ENCODE measurements at regions of chr17 and their contacts with region 1.

Region 1: GRCh38 chr17:57499648-57500049 is 243.3 kb downstream of the MSI2 start:
- DNase-seq: no peak
- H3K4me3 ChIP-seq: no peak overlapping the region
- H3K27ac ChIP-seq: no peak overlapping the region
- H3K4me1 ChIP-seq: no peaks in the 10 kb centered on the region
- H3K27me3 ChIP-seq: no peaks in the 10 kb centered on the region
- CTCF ChIP-seq: no peak

Region 2: GRCh38 chr17:57432520-57433277 is 67.0 kb before region 1 on chr17:
- intact Hi-C with region 1: loop called (anchors 10 kb)
- DNase-seq: no peak
- H3K4me3 ChIP-seq: no peak overlapping the region
- H3K27ac ChIP-seq: no peak overlapping the region
- H3K4me1 ChIP-seq: no peaks in the 10 kb centered on the region
- H3K27me3 ChIP-seq: no peaks in the 10 kb centered on the region
- CTCF ChIP-seq: no peak

Region 3: GRCh38 chr17:57622683-57623433 is 123.2 kb after region 1 on chr17:
- intact Hi-C with region 1: no loop called
- DNase-seq: peak in 1 of 2 donors; percentile 28
- H3K4me3 ChIP-seq: no peak overlapping the region
- H3K27ac ChIP-seq: no peak overlapping the region
- H3K4me1 ChIP-seq: no peaks in the 10 kb centered on the region
- H3K27me3 ChIP-seq: no peaks in the 10 kb centered on the region
- CTCF ChIP-seq: no peak